ENCODE measurements at regions of chr11 and their contacts with region 1.

Region 1: GRCh38 chr11:25981998-25982397 is 349.9 kb upstream of the ANO3 start:
- DNase-seq: peak; percentile 16
- H3K4me3 ChIP-seq: no peak overlapping the region
- H3K27me3 ChIP-seq: no peaks in the 10 kb centered on the region
- CTCF ChIP-seq: peak; percentile 52

Region 2: GRCh38 chr11:25970726-25971508 is 11.1 kb before region 1 on chr11:
- CTCF ChIA-PET with region 1: interaction called, 21 read pairs
- POLR2A ChIA-PET with region 1: no interaction called
- DNase-seq: no peak
- H3K4me3 ChIP-seq: no peak overlapping the region
- H3K27me3 ChIP-seq: no peaks in the 10 kb centered on the region
- CTCF ChIP-seq: peak; percentile 18; the same call in 1 of the 2 replicates

Region 3: GRCh38 chr11:26134481-26135355 is 152.7 kb after region 1 on chr11:
- CTCF ChIA-PET with region 1: interaction called, 20 read pairs
- POLR2A ChIA-PET with region 1: no interaction called
- DNase-seq: no peak
- H3K4me3 ChIP-seq: no peak overlapping the region
- H3K27me3 ChIP-seq: no peaks in the 10 kb centered on the region
- CTCF ChIP-seq: peak; percentile 37

Region 4: DNA sequence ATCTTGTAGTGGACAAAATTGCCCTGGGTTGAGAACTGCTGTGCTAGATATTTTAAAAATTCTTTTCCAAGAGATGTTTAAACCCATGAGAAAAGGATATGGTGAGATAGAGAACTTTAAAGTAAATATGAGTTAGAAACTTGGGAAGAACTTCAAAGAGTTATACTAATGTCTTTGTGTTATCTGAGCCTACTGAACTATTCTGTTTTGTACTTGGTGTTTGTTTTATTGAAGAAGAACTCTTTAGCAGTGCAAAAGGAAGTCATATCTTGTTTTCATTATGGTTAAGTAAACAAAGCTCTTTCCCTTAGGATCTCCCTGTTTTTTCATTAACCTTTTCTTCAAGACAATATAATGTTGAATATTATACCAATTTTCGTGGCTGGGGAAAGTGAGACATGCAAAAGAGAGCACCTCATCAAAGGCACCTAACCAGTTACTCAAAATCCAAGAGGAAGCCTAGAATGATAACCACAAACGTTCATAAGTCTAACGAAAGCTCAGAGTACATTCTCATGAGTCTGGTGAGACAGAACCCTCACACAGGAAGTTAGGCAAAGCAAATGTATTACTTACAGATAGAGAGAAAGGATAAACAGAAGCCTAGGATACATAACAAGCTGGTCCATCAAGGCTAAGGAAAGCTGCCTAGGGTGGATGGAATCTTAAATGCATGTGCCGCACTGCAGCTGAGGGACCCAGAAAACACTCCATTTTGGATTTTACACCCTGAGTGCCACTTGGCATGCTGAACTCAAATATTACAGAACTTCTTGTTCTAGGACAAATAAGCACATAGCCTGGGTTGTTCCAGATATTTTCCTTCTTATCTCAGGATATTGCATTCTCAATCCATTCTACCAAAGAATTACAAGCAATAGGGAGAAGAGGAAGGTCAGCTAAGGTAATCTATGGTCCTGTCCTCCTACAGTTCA is 237.5 kb after region 1 on chr11:
- CTCF ChIA-PET with region 1: interaction called, 33 read pairs
- POLR2A ChIA-PET with region 1: no interaction called
- DNase-seq: no peak
- H3K4me3 ChIP-seq: no peak overlapping the region
- H3K27me3 ChIP-seq: no peaks in the 10 kb centered on the region
- CTCF ChIP-seq: no peak

Region 5: GRCh38 chr11:26268980-26269660 is 287.1 kb after region 1 on chr11:
- CTCF ChIA-PET with region 1: interaction called, 11 read pairs
- POLR2A ChIA-PET with region 1: no interaction called
- DNase-seq: no peak
- H3K4me3 ChIP-seq: no peak overlapping the region
- H3K27me3 ChIP-seq: no peaks in the 10 kb centered on the region
- CTCF ChIP-seq: no peak